RWPE1 (cell line): ENCODE measurements at regions of chr10 and their contacts with region 1.

Region 1: DNA sequence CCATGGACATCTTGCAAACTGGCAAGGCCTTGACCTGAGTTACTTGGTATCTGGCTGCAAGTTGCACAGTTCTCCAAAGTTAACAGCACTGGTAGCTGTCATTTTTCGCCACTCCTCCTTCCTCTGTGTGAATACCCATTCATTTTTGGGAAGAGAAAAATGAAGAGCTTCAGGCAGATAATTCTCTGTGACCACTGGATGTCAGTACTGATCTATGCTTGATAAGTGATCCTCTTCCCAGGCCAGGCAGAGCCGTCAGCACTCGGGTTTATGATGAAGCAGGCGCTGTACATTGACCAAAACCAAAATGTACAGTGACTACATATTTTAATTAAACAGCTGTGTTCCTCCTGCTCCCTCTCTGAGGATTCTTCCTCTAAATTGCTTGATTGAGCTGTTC is 55.9 kb upstream of the PDZD8 start:
- DNase-seq: peak; percentile 77
- H3K27ac ChIP-seq: no peak overlapping the region
- CTCF ChIP-seq: peak; percentile 64

Region 2: GRCh38 chr10:117216611-117217195 is 214.5 kb before region 1 on chr10:
- CTCF ChIA-PET with region 1: interaction called, 13 read pairs
- POLR2A ChIA-PET with region 1: no interaction called
- DNase-seq: peak; percentile 89
- H3K27ac ChIP-seq: no peak overlapping the region
- CTCF ChIP-seq: peak; percentile 98

Region 3: DNA sequence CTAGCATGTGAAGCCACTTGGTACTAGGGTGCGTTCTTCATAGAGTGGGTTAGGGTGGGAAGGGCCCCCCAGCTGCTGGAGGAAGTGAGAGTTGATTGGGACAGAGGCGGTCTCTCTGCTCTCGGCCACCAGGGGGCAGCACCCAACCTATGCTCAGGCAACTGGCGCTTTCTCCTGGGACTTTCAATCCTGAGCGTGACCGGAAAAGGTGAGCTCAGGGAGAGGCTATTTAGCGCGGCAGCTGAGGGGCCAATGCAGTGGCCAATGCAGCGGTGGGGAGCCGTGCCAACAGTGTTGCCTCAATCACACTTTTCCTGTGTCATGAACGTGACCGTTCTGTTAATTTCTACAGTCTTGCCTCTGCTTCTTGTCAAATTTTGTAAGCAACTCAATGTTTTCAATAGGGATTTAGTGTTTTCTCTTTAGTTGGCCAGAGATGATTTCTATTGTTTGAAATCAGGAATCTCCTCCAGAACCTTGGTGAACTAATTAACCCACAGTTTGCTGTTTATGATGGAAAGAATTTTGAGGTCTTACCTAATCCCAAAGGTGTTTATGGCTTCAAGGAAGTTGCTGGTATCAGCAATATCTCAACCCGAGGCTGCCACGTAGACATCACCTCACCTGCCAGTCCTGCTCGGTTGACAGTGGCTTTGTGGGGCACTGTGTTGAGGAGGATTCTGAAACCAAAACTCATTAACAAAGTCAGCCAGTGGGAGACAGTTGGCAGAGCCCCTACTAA is 12.0 kb after region 1 on chr10:
- CTCF ChIA-PET with region 1: interaction called, 10 read pairs
- POLR2A ChIA-PET with region 1: no interaction called
- DNase-seq: peak; percentile 65
- H3K27ac ChIP-seq: peak overlapping the region; percentile 88
- CTCF ChIP-seq: peak; percentile 81

Region 4: GRCh38 chr10:117477961-117478670 is 47.0 kb after region 1 on chr10:
- CTCF ChIA-PET with region 1: interaction called, 29 read pairs
- POLR2A ChIA-PET with region 1: no interaction called
- DNase-seq: peak; percentile 88
- H3K27ac ChIP-seq: no peak overlapping the region
- CTCF ChIP-seq: no peak

Region 5: GRCh38 chr10:117483056-117483604 is 52.0 kb after region 1 on chr10:
- CTCF ChIA-PET with region 1: interaction called, 29 read pairs
- POLR2A ChIA-PET with region 1: no interaction called
- DNase-seq: no peak
- H3K27ac ChIP-seq: no peak overlapping the region
- CTCF ChIP-seq: no peak

Region 6: GRCh38 chr10:117496616-117497028 is 65.5 kb after region 1 on chr10:
- CTCF ChIA-PET with region 1: interaction called, 38 read pairs
- POLR2A ChIA-PET with region 1: no interaction called
- DNase-seq: peak; percentile 81
- H3K27ac ChIP-seq: no peak overlapping the region
- CTCF ChIP-seq: peak; percentile 94

Region 7: DNA sequence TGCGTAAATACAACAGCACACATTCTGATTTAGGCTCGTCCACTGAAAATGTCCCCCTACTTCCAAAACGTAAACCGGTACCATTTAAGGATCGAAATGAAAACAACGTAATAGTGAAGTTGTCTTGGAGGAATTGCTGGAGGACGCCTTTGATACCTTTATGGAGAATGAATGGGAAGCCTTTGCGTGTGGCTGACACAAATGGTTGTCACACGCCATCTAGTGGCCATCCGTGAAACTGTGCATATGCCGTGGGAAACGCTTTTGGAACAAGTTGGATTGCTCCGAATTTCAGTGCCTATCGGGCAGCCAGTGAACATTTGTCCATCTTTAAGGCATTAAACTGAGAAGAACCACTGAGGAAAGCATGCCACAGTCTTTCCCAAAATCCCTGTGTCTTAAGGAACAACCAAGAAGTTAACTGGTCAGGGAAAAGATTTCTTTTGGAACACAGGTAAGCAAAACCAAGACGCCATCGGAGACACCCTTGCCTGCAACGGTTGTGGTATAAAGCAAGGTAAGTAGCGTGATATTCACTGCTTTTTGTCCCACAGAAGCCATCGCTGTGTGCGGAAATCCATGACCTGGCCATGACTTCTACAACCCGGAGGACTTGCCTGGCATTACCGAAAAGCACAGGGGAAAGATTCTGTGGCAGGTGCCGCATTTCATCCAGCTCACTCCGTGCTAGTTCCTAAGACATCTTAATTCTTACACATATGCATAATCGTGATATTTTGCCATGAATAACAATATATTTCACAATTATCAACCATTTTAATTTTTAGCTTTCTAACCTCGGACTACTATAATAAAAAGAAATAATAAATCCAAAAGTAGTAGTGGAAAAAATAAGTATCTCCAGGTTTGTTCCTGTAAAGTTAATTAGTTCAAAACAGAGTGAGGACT is 810.3 kb after region 1 on chr10:
- CTCF ChIA-PET with region 1: interaction called, 10 read pairs
- POLR2A ChIA-PET with region 1: no interaction called
- DNase-seq: peak; percentile 69
- H3K27ac ChIP-seq: no peak overlapping the region
- CTCF ChIP-seq: peak; percentile 88